HepG2 (cell line): ENCODE measurements at regions of chr6 and their contacts with region 1.

Region 1: GRCh38 chr6:20877008-20877937 is 343.0 kb downstream of the CDKAL1 start:
- DNase-seq: peak; percentile 93
- ATAC-seq: peak; percentile 100
- H3K4me3 ChIP-seq: peak overlapping the region in 1 of 3 experiments; percentile 8; a peak in 1 of 6 replicates
- H3K27ac ChIP-seq: peak overlapping the region; percentile 70
- H3K4me1 ChIP-seq: peaks cover 62% of the 10 kb centered on the region
- H3K27me3 ChIP-seq: no peaks in the 10 kb centered on the region
- CTCF ChIP-seq: 0 out of 2 replicates have a peak, but pooled peaks have one; percentile 9
- EP300 ChIP-seq: peak; percentile 45 to 88; a peak in 3 of 4 replicates
- POLR2A ChIP-seq: 0 out of 4 replicates have a peak, but pooled peaks of 1 of the 2 experiments have one; percentile 21
- RAD21 ChIP-seq: no peak

Region 2: DNA sequence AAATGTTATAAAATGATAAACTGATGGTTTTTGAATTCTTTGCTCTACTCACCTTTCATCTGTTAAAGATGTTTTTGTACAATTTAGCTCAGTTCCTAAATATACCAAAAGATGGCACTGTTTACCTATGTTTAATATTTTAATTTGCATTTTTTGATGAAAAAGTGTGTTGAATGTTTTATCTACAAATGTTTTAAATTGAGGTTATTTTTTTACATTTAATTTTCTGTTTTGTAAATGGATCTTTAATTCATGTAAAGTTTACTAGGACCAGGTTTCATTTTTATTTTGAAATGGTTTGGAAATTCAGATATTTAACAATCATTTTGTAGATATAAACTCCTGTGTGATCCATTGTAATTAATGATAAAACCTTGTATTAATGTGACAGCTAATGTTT is 313.0 kb before region 1 on chr6:
- CTCF ChIA-PET with region 1: no interaction called
- POLR2A ChIA-PET with region 1: no interaction called
- in situ Hi-C with region 1: loop called (anchors 10 kb)
- intact Hi-C with region 1: loop called (anchors 5 kb)
- DNase-seq: no peak
- ATAC-seq: no peak
- H3K4me3 ChIP-seq: no peak overlapping the region
- H3K27ac ChIP-seq: no peak overlapping the region
- H3K4me1 ChIP-seq: peaks cover 3% of the 10 kb centered on the region
- H3K27me3 ChIP-seq: no peaks in the 10 kb centered on the region
- CTCF ChIP-seq: peak; percentile 35
- EP300 ChIP-seq: no peak
- POLR2A ChIP-seq: no peak
- RAD21 ChIP-seq: no peak

Region 3: GRCh38 chr6:20805021-20805420 is 72.3 kb before region 1 on chr6:
- CTCF ChIA-PET with region 1: no interaction called
- POLR2A ChIA-PET with region 1: no interaction called
- in situ Hi-C with region 1: no loop called
- intact Hi-C with region 1: no loop called
- DNase-seq: no peak
- ATAC-seq: no peak
- H3K4me3 ChIP-seq: no peak overlapping the region
- H3K27ac ChIP-seq: no peak overlapping the region
- H3K4me1 ChIP-seq: no peaks in the 10 kb centered on the region
- H3K27me3 ChIP-seq: no peaks in the 10 kb centered on the region
- CTCF ChIP-seq: no peak
- EP300 ChIP-seq: no peak
- POLR2A ChIP-seq: no peak
- RAD21 ChIP-seq: no peak

Region 4: GRCh38 chr6:21003780-21004541 is 126.7 kb after region 1 on chr6:
- CTCF ChIA-PET with region 1: interaction called, 3 read pairs
- POLR2A ChIA-PET with region 1: interaction called, 4 read pairs
- in situ Hi-C with region 1: no loop called
- intact Hi-C with region 1: loop called (anchors 5 kb)
- DNase-seq: peak; percentile 99
- ATAC-seq: peak; percentile 96
- H3K4me3 ChIP-seq: no peak overlapping the region; a peak in 1 of 6 replicates
- H3K27ac ChIP-seq: peak overlapping the region; percentile 65
- H3K4me1 ChIP-seq: peaks cover 63% of the 10 kb centered on the region
- H3K27me3 ChIP-seq: no peaks in the 10 kb centered on the region
- CTCF ChIP-seq: no peak
- EP300 ChIP-seq: peak; percentile 92 to 99; a peak in 3 of 4 replicates
- POLR2A ChIP-seq: no peak
- RAD21 ChIP-seq: no peak

Region 5: DNA sequence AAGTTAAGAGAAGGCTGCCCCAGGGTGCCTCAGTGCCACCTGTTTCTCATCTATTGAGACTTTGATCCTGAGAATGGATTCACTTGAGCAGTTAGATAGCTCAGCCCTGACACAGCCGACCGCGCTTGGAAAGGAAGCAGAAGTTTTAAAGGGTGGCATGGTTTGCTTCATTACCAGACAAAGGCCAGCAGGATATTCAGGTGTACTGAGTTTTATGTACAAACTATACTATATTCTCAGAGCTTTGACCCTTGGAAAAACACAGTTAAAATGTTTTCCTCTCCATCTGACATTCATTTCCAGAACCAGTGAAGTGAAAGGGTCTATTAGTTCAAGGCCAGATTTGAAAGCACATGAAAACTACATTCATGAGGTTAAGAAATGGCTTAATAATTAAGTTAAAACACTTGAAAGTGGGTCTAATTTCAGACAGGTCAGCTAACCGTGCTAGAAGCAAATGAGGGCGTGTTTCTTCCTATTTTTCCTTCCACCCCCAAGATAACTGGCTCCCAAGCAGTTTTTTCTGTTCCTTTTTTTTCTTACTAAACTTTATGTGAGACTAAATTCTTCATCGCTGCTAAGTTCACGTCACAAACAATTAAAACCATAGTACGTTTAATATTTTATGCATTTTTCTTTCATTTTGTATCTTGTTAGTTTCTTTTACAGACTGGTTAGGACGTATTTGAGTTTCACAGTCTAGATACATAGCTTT is 331.0 kb after region 1 on chr6:
- CTCF ChIA-PET with region 1: no interaction called
- POLR2A ChIA-PET with region 1: no interaction called
- in situ Hi-C with region 1: no loop called
- intact Hi-C with region 1: loop called (anchors 1 kb)
- DNase-seq: peak; percentile 83
- ATAC-seq: peak; percentile 93
- H3K4me3 ChIP-seq: no peak overlapping the region; a peak in 1 of 6 replicates
- H3K27ac ChIP-seq: peak overlapping the region; percentile 80
- H3K4me1 ChIP-seq: peaks cover 28% of the 10 kb centered on the region
- H3K27me3 ChIP-seq: no peaks in the 10 kb centered on the region
- CTCF ChIP-seq: no peak
- EP300 ChIP-seq: peak in 1 of 2 experiments; percentile 54; a peak in 1 of 4 replicates
- POLR2A ChIP-seq: no peak
- RAD21 ChIP-seq: no peak

Region 6: DNA sequence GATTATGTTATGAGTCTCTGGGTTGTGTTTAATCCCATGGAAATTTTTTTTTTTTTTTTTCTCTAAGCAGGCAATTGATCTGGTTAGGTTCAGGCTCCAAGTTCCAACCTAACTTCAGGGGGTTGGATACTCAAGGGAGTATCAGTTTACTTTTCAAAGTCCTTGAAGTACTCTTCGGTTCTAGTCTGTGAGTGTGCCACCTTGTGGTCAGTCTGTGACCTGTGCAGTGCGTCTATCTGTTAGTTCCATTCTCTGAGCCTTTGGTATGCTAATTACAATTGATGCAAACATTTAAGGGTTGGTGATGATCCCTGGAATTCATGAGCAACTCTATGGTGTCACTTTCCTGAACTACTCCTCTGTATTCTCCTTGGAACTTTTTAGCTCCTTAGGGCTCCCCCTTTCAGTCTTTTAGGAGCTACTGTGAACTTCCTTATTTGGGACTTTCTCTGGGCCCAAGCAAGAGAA is 1058.3 kb after region 1 on chr6:
- CTCF ChIA-PET with region 1: no interaction called
- POLR2A ChIA-PET with region 1: no interaction called
- in situ Hi-C with region 1: loop called (anchors 25 kb)
- intact Hi-C with region 1: no loop called
- DNase-seq: peak; percentile 36
- ATAC-seq: peak; percentile 87
- H3K4me3 ChIP-seq: no peak overlapping the region
- H3K27ac ChIP-seq: no peak overlapping the region
- H3K4me1 ChIP-seq: no peaks in the 10 kb centered on the region
- H3K27me3 ChIP-seq: no peaks in the 10 kb centered on the region
- CTCF ChIP-seq: peak; percentile 58
- EP300 ChIP-seq: no peak
- POLR2A ChIP-seq: no peak
- RAD21 ChIP-seq: no peak